ENCODE measurements at regions of chr3 and their contacts with region 1.

Region 1: GRCh38 chr3:50542177-50543034 is 25.1 kb downstream of the C3orf18 start:
- DNase-seq: peak; percentile 88
- ATAC-seq: peak; percentile 92
- H3K4me3 ChIP-seq: no peak overlapping the region
- H3K27ac ChIP-seq: no peak overlapping the region
- H3K4me1 ChIP-seq: no peaks in the 10 kb centered on the region
- H3K27me3 ChIP-seq: peaks cover 14% of the 10 kb centered on the region
- CTCF ChIP-seq: peak; percentile 95

Region 2: GRCh38 chr3:50436114-50436674 is 106.2 kb before region 1 on chr3:
- CTCF ChIA-PET with region 1: no interaction called
- POLR2A ChIA-PET with region 1: no interaction called
- intact Hi-C with region 1: loop called (anchors 1 kb)
- DNase-seq: peak; percentile 77
- ATAC-seq: peak; percentile 89
- H3K4me3 ChIP-seq: no peak overlapping the region
- H3K27ac ChIP-seq: no peak overlapping the region
- H3K4me1 ChIP-seq: no peaks in the 10 kb centered on the region
- H3K27me3 ChIP-seq: no peaks in the 10 kb centered on the region
- CTCF ChIP-seq: peak; percentile 95

Region 3: GRCh38 chr3:50445919-50446318 is 96.5 kb before region 1 on chr3:
- CTCF ChIA-PET with region 1: interaction called, 5 read pairs
- POLR2A ChIA-PET with region 1: no interaction called
- intact Hi-C with region 1: loop called (anchors 2 kb)
- DNase-seq: peak; percentile 30
- ATAC-seq: peak; percentile 97
- H3K4me3 ChIP-seq: no peak overlapping the region
- H3K27ac ChIP-seq: no peak overlapping the region
- H3K4me1 ChIP-seq: no peaks in the 10 kb centered on the region
- H3K27me3 ChIP-seq: no peaks in the 10 kb centered on the region
- CTCF ChIP-seq: no peak

Region 4: GRCh38 chr3:50658416-50658815 is 116.0 kb after region 1 on chr3:
- CTCF ChIA-PET with region 1: no interaction called
- POLR2A ChIA-PET with region 1: no interaction called
- intact Hi-C with region 1: no loop called
- DNase-seq: peak; percentile 69
- ATAC-seq: peak; percentile 12; the same call in 1 of the 2 replicates
- H3K4me3 ChIP-seq: no peak overlapping the region
- H3K27ac ChIP-seq: no peak overlapping the region
- H3K4me1 ChIP-seq: no peaks in the 10 kb centered on the region
- H3K27me3 ChIP-seq: no peaks in the 10 kb centered on the region
- CTCF ChIP-seq: no peak

Region 5: DNA sequence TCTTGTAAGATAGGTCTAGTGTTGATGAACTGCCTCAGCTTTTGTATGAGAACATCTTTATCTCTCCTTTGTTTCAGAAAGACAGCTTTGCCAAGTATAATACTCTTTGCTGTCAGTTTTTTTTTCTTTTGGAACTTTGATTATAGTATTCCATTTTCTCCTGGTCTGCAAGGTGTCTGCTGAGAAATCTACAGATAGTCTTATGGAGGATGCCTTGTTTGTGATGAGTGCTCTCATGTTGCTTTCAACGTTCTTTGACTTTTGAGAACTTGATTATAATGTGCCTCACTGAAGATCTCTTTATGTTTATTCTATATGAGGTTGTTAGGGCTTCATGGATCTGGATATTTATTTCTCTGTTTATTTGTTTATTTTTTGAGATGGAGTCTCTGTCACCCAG is 192.6 kb after region 1 on chr3:
- CTCF ChIA-PET with region 1: no interaction called
- POLR2A ChIA-PET with region 1: no interaction called
- intact Hi-C with region 1: no loop called
- DNase-seq: no peak
- ATAC-seq: no peak
- H3K4me3 ChIP-seq: no peak overlapping the region
- H3K27ac ChIP-seq: no peak overlapping the region
- H3K4me1 ChIP-seq: no peaks in the 10 kb centered on the region
- H3K27me3 ChIP-seq: no peaks in the 10 kb centered on the region
- CTCF ChIP-seq: no peak